ENCODE measurements at regions of chr11 and their contacts with region 1.

Region 1: GRCh38 chr11:73625696-73626318 is 20.6 kb upstream of the PLEKHB1 start:
- DNase-seq: peak; percentile 53 to 80 (median 70)
- ATAC-seq: peak; percentile 95
- H3K4me3 ChIP-seq: no peak overlapping the region
- H3K4me3 Mint-ChIP-seq: no peak overlapping the region
- H3K27ac ChIP-seq: no peak overlapping the region
- H3K27ac Mint-ChIP-seq: no peak overlapping the region
- H3K4me1 ChIP-seq: no peaks in the 10 kb centered on the region
- H3K4me1 Mint-ChIP-seq: peaks cover 2% of the 10 kb centered on the region
- H3K27me3 ChIP-seq: no peaks in the 10 kb centered on the region
- H3K27me3 Mint-ChIP-seq: peaks cover 16% of the 10 kb centered on the region
- CTCF ChIP-seq: peak; percentile 99

Region 2: GRCh38 chr11:73164803-73165540 is 460.8 kb before region 1 on chr11:
- CTCF ChIA-PET with region 1: no interaction called
- POLR2A ChIA-PET with region 1: no interaction called
- intact Hi-C with region 1: no loop called
- DNase-seq: no peak
- ATAC-seq: no peak
- H3K4me3 ChIP-seq: no peak overlapping the region
- H3K4me3 Mint-ChIP-seq: no peak overlapping the region
- H3K27ac ChIP-seq: no peak overlapping the region
- H3K27ac Mint-ChIP-seq: no peak overlapping the region
- H3K4me1 ChIP-seq: no peaks in the 10 kb centered on the region
- H3K4me1 Mint-ChIP-seq: no peaks in the 10 kb centered on the region
- H3K27me3 ChIP-seq: no peaks in the 10 kb centered on the region
- H3K27me3 Mint-ChIP-seq: no peaks in the 10 kb centered on the region
- CTCF ChIP-seq: no peak

Region 3: DNA sequence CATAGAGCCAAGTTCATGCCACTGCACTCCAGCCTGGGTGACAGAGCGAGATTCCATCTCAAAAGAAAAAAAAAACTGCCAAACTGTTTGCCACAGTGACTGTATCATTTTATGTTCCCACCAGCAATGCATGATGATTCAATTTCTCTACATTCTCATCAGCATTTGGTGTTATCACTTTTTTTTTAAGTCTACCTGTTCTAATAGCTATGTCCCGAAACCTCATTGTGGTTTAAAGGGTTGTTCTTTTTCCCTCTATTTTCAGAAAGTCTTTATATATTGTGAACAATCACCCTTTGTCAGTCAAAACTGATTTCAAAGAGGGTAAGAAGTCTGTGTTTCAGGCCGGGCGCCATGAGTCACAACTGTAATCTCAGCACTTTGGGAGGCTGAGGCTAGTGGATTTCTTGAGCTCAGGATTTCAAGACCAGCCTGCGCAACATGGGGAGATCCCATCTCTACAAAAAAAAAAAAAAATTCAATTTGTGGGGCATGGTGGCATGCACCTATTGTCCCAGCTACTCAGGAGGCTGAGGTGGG is 13.1 kb before region 1 on chr11:
- CTCF ChIA-PET with region 1: interaction called, 11 read pairs
- POLR2A ChIA-PET with region 1: no interaction called
- intact Hi-C with region 1: no loop called
- DNase-seq: no peak
- ATAC-seq: no peak
- H3K4me3 ChIP-seq: no peak overlapping the region
- H3K4me3 Mint-ChIP-seq: no peak overlapping the region
- H3K27ac ChIP-seq: no peak overlapping the region
- H3K27ac Mint-ChIP-seq: no peak overlapping the region
- H3K4me1 ChIP-seq: no peaks in the 10 kb centered on the region
- H3K4me1 Mint-ChIP-seq: no peaks in the 10 kb centered on the region
- H3K27me3 ChIP-seq: no peaks in the 10 kb centered on the region
- H3K27me3 Mint-ChIP-seq: peaks cover 5% of the 10 kb centered on the region
- CTCF ChIP-seq: no peak

Region 4: GRCh38 chr11:73640592-73640991 is 14.8 kb after region 1 on chr11:
- CTCF ChIA-PET with region 1: interaction called, 49 read pairs
- POLR2A ChIA-PET with region 1: interaction called, 5 read pairs
- intact Hi-C with region 1: no loop called
- DNase-seq: no peak
- ATAC-seq: no peak
- H3K4me3 ChIP-seq: no peak overlapping the region
- H3K4me3 Mint-ChIP-seq: no peak overlapping the region
- H3K27ac ChIP-seq: no peak overlapping the region
- H3K27ac Mint-ChIP-seq: peak overlapping the region; percentile 58
- H3K4me1 ChIP-seq: peaks cover 9% of the 10 kb centered on the region
- H3K4me1 Mint-ChIP-seq: peaks cover 8% of the 10 kb centered on the region
- H3K27me3 ChIP-seq: peaks cover 0 to 1% of the 10 kb centered on the region in 2 experiments
- H3K27me3 Mint-ChIP-seq: no peaks in the 10 kb centered on the region
- CTCF ChIP-seq: no peak

Region 5: GRCh38 chr11:73647459-73648100 is 21.8 kb after region 1 on chr11:
- CTCF ChIA-PET with region 1: interaction called, 351 read pairs
- POLR2A ChIA-PET with region 1: no interaction called
- intact Hi-C with region 1: no loop called
- DNase-seq: peak; percentile 89 to 97 (median 94)
- ATAC-seq: peak; percentile 99
- H3K4me3 ChIP-seq: peak overlapping the region; percentile 55 to 79
- H3K4me3 Mint-ChIP-seq: peak overlapping the region; percentile 90
- H3K27ac ChIP-seq: peak overlapping the region; percentile 42 to 58
- H3K27ac Mint-ChIP-seq: peak overlapping the region; percentile 94
- H3K4me1 ChIP-seq: peaks cover 19% of the 10 kb centered on the region
- H3K4me1 Mint-ChIP-seq: peaks cover 24% of the 10 kb centered on the region
- H3K27me3 ChIP-seq: peaks cover 0 to 4% of the 10 kb centered on the region in 2 experiments
- H3K27me3 Mint-ChIP-seq: no peaks in the 10 kb centered on the region
- CTCF ChIP-seq: no peak

Region 6: GRCh38 chr11:73705053-73705452 is 79.2 kb after region 1 on chr11:
- CTCF ChIA-PET with region 1: no interaction called
- POLR2A ChIA-PET with region 1: no interaction called
- intact Hi-C with region 1: no loop called
- DNase-seq: no peak
- ATAC-seq: no peak
- H3K4me3 ChIP-seq: no peak overlapping the region
- H3K4me3 Mint-ChIP-seq: no peak overlapping the region
- H3K27ac ChIP-seq: no peak overlapping the region
- H3K27ac Mint-ChIP-seq: no peak overlapping the region
- H3K4me1 ChIP-seq: no peaks in the 10 kb centered on the region
- H3K4me1 Mint-ChIP-seq: no peaks in the 10 kb centered on the region
- H3K27me3 ChIP-seq: no peaks in the 10 kb centered on the region
- H3K27me3 Mint-ChIP-seq: no peaks in the 10 kb centered on the region
- CTCF ChIP-seq: no peak

Region 7: GRCh38 chr11:73931039-73931645 is 305.3 kb after region 1 on chr11:
- CTCF ChIA-PET with region 1: interaction called, 9 read pairs
- POLR2A ChIA-PET with region 1: no interaction called
- intact Hi-C with region 1: loop called (anchors 2 to 5 kb)
- DNase-seq: peak in 2 of 9 experiments; percentile 24 to 32
- ATAC-seq: no peak
- H3K4me3 ChIP-seq: no peak overlapping the region
- H3K4me3 Mint-ChIP-seq: no peak overlapping the region
- H3K27ac ChIP-seq: no peak overlapping the region
- H3K27ac Mint-ChIP-seq: peak overlapping the region; percentile 27
- H3K4me1 ChIP-seq: no peaks in the 10 kb centered on the region
- H3K4me1 Mint-ChIP-seq: no peaks in the 10 kb centered on the region
- H3K27me3 ChIP-seq: no peaks in the 10 kb centered on the region
- H3K27me3 Mint-ChIP-seq: no peaks in the 10 kb centered on the region
- CTCF ChIP-seq: no peak

Region 8: DNA sequence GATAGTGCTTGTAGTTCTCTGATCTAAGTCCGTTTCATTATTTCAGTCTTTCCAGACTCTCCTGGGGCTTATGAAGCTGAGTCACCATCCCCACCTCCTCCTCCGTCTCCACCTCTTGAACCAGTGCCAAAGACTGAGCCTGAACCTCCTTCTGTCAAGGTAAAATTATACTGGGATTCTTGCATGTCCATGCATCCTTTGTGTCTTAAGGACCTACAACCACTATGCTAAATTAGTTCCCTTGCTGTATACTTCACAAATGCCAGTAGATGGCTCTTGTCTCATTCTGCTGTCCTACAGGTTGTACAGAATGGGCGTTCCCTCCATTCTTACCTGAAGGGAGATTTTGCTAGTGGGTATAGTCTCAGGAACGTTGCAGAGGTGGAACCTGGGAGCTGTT is 1008.7 kb after region 1 on chr11:
- CTCF ChIA-PET with region 1: no interaction called
- POLR2A ChIA-PET with region 1: no interaction called
- intact Hi-C with region 1: no loop called
- DNase-seq: no peak
- ATAC-seq: no peak
- H3K4me3 ChIP-seq: no peak overlapping the region
- H3K4me3 Mint-ChIP-seq: no peak overlapping the region
- H3K27ac ChIP-seq: no peak overlapping the region
- H3K27ac Mint-ChIP-seq: no peak overlapping the region
- H3K4me1 ChIP-seq: no peaks in the 10 kb centered on the region
- H3K4me1 Mint-ChIP-seq: no peaks in the 10 kb centered on the region
- H3K27me3 ChIP-seq: no peaks in the 10 kb centered on the region
- H3K27me3 Mint-ChIP-seq: no peaks in the 10 kb centered on the region
- CTCF ChIP-seq: no peak